Panc1 (cell line): ENCODE measurements at regions of chr11 and their contacts with region 1.

Region 1: DNA sequence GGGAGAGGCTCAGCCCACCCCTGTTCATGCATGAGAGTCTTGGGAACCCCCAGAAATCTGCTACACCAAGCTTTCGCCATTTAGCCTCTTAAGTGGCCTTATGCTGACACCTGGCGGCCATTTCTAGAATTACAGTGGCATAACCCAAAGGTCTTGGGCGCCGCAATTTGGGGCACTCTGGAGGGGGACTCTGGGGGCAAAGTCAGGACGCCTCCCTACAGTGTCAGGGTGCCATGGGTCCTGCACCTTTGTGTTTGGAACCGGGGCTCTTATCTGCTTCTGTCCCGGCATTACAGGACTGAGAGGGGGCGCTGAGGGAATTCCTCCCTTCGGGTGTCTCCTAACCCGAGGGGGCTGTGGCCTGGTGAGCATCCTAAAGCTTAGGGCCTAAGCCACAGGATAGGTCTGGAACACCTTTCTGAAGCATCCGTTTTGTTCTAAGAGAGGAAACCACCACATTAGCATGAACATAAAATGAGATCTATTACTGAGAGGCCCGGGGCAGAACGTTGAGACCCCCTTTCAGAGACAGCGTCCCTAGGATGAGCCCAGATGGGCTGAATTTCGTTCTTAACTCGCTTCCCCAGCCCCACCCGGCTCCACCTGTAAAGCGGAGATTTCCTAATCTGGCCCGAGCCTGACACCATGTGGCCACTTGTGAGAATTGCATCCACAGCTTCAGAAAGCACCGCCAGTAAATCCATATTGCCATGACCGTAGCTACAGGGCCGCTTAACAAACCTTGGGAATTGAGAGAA is 9.3 kb downstream of the INS start:
- DNase-seq: peak; percentile 83
- ATAC-seq: peak; percentile 52
- H3K4me3 ChIP-seq: no peak overlapping the region
- H3K27ac ChIP-seq: no peak overlapping the region
- H3K4me1 ChIP-seq: peaks cover 15% of the 10 kb centered on the region
- H3K27me3 ChIP-seq: peaks cover 10% of the 10 kb centered on the region
- CTCF ChIP-seq: peak; percentile 96

Region 2: GRCh38 chr11:1694064-1694845 is 457.4 kb before region 1 on chr11:
- CTCF ChIA-PET with region 1: interaction called, 18 read pairs
- POLR2A ChIA-PET with region 1: interaction called, 3 read pairs
- in situ Hi-C with region 1: no loop called
- intact Hi-C with region 1: loop called (anchors 5 kb)
- DNase-seq: peak; percentile 47
- ATAC-seq: peak; percentile 93
- H3K4me3 ChIP-seq: peak overlapping the region; percentile 35 to 51; a peak in 3 of 4 replicates
- H3K27ac ChIP-seq: peak overlapping the region; percentile 91
- H3K4me1 ChIP-seq: peaks cover 20% of the 10 kb centered on the region
- H3K27me3 ChIP-seq: no peaks in the 10 kb centered on the region
- CTCF ChIP-seq: peak; percentile 87

Region 3: DNA sequence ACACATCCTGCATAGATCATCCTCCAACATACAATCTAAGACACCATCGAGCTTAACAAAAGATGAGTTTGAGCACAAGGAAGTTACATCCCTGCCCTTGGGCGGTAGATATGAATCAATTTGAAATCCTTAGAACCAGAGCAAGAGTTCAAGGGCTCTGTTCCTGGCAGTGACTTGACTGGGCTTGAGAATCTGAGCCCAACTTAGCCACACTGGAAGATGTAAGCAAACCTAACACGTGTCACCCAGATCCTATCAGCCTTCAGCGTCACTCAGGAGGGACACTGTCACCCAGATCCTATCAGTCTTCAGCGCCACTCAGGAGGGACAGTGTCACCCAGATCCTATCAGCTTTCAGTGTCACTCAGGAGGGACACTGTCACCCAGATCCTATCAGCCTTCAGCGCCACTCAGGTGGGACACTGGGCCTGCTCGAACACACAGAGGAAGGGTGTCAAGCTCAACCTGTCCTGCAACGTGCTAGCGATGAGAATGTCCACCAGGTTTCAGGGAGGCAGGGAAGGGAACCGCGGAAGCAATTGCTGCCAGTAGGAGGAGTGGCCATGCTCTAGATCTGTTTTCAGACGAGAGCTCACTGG is 355.2 kb before region 1 on chr11:
- CTCF ChIA-PET with region 1: no interaction called
- POLR2A ChIA-PET with region 1: no interaction called
- in situ Hi-C with region 1: no loop called
- intact Hi-C with region 1: no loop called
- DNase-seq: no peak
- ATAC-seq: peak; percentile 22; the same call in 1 of the 2 replicates
- H3K4me3 ChIP-seq: no peak overlapping the region
- H3K27ac ChIP-seq: 0 out of 2 replicates have a peak overlapping the region, but pooled peaks have one; percentile 2
- H3K4me1 ChIP-seq: peaks cover 5% of the 10 kb centered on the region
- H3K27me3 ChIP-seq: no peaks in the 10 kb centered on the region
- CTCF ChIP-seq: no peak

Region 4: DNA sequence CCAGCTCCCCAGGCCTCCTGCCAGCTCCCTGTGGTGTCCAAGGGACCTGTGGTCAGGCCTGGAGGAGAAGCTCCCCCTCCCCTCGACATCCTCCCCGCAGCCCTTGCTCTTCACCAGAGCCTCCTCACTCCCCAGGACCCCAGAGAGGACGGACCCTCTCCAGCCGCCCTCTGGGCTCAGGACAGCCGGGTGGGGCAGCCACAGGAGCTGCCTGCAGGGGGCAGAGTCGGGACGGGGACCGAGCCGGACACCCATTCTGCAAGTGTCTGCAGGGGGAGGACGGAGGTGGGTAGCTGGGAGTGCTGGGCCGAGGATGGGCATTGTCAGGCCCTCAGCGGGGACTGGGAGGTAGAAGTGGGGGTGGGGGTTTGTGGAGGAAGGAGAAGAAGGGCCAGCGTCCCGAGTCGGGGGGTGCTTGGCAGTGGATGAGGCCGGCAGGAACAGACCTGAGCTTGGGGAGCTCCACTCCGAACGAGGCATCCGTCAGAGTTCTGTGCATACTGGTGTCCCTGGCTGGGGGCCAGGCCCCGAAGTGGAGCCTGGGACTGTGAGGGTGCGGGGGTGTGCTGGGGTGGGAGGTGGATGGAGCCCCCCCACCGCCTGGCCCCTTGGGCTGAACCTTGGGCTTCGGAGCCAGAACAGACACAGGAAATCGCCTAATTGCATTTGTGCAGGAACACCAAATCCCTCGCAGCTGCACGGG is 275.2 kb before region 1 on chr11:
- CTCF ChIA-PET with region 1: interaction called, 3 read pairs
- POLR2A ChIA-PET with region 1: no interaction called
- in situ Hi-C with region 1: no loop called
- intact Hi-C with region 1: loop called (anchors 5 kb)
- DNase-seq: no peak
- ATAC-seq: no peak
- H3K4me3 ChIP-seq: no peak overlapping the region
- H3K27ac ChIP-seq: peak overlapping the region; percentile 44; the same call in 1 of the 2 replicates
- H3K4me1 ChIP-seq: peaks cover 34% of the 10 kb centered on the region
- H3K27me3 ChIP-seq: no peaks in the 10 kb centered on the region
- CTCF ChIP-seq: peak; percentile 93

Region 5: GRCh38 chr11:2002807-2003206 is 148.9 kb before region 1 on chr11:
- CTCF ChIA-PET with region 1: interaction called, 13 read pairs
- POLR2A ChIA-PET with region 1: no interaction called
- in situ Hi-C with region 1: no loop called
- intact Hi-C with region 1: no loop called
- DNase-seq: no peak
- ATAC-seq: peak; percentile 64
- H3K4me3 ChIP-seq: no peak overlapping the region
- H3K27ac ChIP-seq: no peak overlapping the region
- H3K4me1 ChIP-seq: no peaks in the 10 kb centered on the region
- H3K27me3 ChIP-seq: no peaks in the 10 kb centered on the region
- CTCF ChIP-seq: no peak

Region 6: DNA sequence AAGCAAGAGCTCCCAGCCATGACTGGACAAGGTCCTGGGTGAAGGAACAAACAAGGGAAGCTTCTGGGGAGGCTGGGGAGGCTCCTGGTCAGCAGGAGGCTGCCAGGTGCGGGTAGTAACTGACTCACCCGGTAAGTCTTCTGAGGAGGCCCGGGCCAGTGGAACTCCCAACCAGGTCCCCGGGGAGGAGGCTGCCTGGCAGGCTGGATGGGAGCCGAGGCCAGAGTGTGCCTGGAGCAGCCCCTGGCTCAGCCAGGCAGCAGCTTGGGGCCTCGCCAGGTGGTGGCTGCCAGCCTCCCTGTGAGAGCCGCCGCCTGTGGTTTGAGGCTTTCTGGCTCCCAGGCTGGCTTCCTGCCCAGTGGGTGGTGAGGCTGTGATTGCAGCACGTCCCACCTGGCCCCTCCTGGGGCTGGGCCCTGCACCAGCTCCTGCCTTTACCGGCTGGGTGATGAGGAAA is 58.7 kb before region 1 on chr11:
- CTCF ChIA-PET with region 1: interaction called, 5 read pairs
- POLR2A ChIA-PET with region 1: interaction called, 5 read pairs
- in situ Hi-C with region 1: loop called (anchors 10 kb)
- intact Hi-C with region 1: no loop called
- DNase-seq: no peak
- ATAC-seq: peak; percentile 31
- H3K4me3 ChIP-seq: no peak overlapping the region
- H3K27ac ChIP-seq: no peak overlapping the region
- H3K4me1 ChIP-seq: peaks cover 8% of the 10 kb centered on the region
- H3K27me3 ChIP-seq: no peaks in the 10 kb centered on the region
- CTCF ChIP-seq: no peak

Region 7: DNA sequence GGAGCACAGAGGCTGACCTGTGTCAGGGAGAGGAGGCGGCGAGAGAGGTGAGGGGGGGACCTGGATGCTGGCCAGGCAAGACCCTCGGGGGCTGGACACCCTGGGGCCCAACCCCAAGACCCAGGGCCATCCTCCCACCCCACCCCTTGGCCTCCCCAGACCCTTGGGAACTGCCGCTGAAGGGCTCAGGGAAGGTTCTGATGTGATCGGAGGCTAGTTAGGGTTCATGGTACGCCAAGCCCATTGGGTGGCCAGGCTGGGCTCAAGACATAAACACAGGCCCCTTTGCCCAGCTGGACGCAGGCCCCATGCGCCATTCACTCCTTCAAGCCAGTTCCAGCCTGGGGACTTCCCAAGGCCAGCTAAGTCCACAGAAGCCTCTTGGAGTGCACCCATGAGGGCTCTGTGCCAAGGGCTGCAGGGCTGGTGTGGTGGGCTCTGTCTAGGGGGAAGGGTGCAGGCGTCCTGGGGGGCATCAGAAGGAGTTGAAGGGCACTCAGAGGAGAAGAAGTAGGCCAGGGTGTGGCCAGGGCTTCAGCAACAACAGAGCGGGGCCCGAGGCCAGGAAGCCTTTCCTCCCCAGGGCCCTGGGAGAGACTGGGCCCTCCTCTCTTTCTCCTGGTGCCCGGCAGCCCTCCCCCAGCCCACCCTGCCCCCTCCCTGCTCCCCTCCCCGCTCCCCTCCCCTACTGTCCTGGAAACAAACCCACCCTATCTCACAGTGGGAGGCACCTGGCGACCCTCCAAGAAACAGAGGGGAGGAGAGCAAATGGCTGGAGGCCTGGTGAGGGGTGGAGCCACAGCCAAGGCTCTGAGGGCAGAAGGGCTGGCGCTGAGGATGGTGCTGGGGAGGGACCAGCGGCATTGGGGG is 163.1 kb after region 1 on chr11:
- CTCF ChIA-PET with region 1: no interaction called
- POLR2A ChIA-PET with region 1: no interaction called
- in situ Hi-C with region 1: no loop called
- intact Hi-C with region 1: no loop called
- DNase-seq: no peak
- ATAC-seq: peak; percentile 59
- H3K4me3 ChIP-seq: no peak overlapping the region
- H3K27ac ChIP-seq: peak overlapping the region; percentile 41; the same call in 1 of the 2 replicates
- H3K4me1 ChIP-seq: peaks cover 18% of the 10 kb centered on the region
- H3K27me3 ChIP-seq: no peaks in the 10 kb centered on the region
- CTCF ChIP-seq: no peak

Region 8: DNA sequence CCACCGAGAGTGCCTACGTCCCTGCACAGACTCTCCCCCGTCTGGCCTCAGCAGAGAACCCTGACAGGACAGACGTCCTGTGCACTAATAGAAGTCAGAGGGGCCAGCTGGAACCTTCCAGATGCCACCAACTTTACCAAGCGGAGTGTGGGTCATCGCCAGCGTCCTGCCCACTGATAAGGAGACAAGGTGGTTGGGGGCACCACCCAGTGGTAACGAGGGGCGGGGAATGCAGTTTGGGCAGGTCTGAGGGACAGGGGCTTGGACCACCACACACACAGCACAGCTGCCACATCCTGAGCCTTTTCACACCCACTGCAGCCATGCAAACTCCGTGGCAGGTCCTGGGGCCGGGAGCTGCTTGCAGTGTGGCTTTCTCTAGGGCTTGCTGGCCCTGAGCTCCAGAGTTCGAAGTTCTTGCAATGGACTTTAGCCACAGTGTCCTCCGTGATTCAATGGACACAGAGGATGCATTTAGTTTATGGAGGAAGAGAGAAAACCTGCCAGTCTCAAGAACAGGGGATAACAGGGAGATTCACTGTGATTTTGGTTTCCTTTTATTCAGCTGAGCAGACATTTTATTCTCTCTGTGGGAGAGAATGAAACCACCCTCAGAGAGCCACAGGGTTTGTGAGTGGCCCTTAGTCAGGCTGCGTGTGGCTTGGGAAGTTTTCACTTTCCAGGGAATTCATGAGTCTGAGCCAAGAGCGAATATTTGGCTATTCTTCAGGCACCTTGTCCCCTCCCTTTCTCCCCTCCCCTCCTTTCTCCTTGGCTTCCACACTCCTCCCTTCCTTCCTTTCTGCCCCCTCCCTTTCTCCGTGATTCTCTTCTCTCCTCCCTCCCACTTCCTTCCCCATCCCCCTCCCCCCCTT is 1053.8 kb after region 1 on chr11:
- CTCF ChIA-PET with region 1: no interaction called
- POLR2A ChIA-PET with region 1: no interaction called
- in situ Hi-C with region 1: no loop called
- intact Hi-C with region 1: no loop called
- DNase-seq: no peak
- ATAC-seq: no peak
- H3K4me3 ChIP-seq: no peak overlapping the region
- H3K27ac ChIP-seq: no peak overlapping the region
- H3K4me1 ChIP-seq: no peaks in the 10 kb centered on the region; the same call in 1 of the 2 replicates
- H3K27me3 ChIP-seq: peaks cover 15% of the 10 kb centered on the region
- CTCF ChIP-seq: no peak